CD8-positive, alpha-beta T cell (primary cell): ENCODE measurements at regions of chr17 and their contacts with region 1.

Region 1: DNA sequence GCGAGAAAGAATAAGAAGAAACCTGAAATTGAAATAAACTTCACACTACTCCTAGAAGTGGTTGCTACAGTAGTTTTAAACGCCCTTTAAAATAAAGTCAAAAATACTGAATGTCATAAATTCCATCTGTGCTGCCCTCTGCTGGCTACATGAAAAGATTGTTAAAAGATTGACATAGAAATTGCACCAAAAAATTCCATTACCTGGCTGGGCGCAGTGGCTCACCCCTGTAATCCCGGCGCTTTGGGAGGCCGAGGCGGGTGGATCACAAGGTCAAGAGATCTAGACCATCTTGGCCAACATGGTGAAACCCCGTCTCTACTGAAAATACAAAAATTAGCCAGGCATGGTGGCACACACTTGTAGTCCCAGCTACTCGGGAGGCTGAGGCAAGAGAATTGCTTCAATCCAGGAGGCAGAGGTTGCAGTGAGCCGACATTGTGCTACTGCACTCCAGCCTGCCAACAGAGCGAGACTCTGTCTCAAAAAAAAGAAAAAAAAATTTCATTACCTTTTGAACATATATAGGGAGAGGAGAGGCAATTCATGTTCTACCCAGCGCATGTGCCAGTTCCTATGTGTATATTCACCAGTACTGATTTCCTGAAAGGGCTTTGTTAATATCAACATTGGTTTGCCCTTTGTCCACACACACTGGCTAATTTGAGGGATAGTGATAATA is 36.5 kb downstream of the CYTH1 start:
- DNase-seq: peak in 6 of 9 experiments; percentile 40 to 80 (median 62)
- ATAC-seq: no peak
- H3K4me3 ChIP-seq: no peak overlapping the region
- H3K4me3 Mint-ChIP-seq: peak overlapping the region; percentile 63
- H3K27ac ChIP-seq: peak overlapping the region; percentile 2 to 84
- H3K27ac Mint-ChIP-seq: peak overlapping the region; percentile 91
- H3K4me1 ChIP-seq: peaks cover 95% of the 10 kb centered on the region
- H3K4me1 Mint-ChIP-seq: peaks cover 93% of the 10 kb centered on the region
- H3K27me3 ChIP-seq: no peaks in the 10 kb centered on the region
- H3K27me3 Mint-ChIP-seq: no peaks in the 10 kb centered on the region
- CTCF ChIP-seq: peak; percentile 87

Region 2: GRCh38 chr17:78708510-78708973 is 37.0 kb before region 1 on chr17:
- CTCF ChIA-PET with region 1: interaction called, 18 read pairs
- POLR2A ChIA-PET with region 1: interaction called, 13 read pairs
- intact Hi-C with region 1: loop called in 1 of 2 experiments (anchors 2 kb)
- DNase-seq: peak in 8 of 9 experiments; percentile 39 to 76 (median 60)
- ATAC-seq: peak; percentile 79
- H3K4me3 ChIP-seq: no peak overlapping the region
- H3K4me3 Mint-ChIP-seq: peak overlapping the region; percentile 33
- H3K27ac ChIP-seq: peak overlapping the region in 1 of 2 experiments; percentile 49
- H3K27ac Mint-ChIP-seq: peak overlapping the region; percentile 88
- H3K4me1 ChIP-seq: peaks cover 40% of the 10 kb centered on the region
- H3K4me1 Mint-ChIP-seq: peaks cover 55% of the 10 kb centered on the region
- H3K27me3 ChIP-seq: no peaks in the 10 kb centered on the region
- H3K27me3 Mint-ChIP-seq: no peaks in the 10 kb centered on the region
- CTCF ChIP-seq: peak; percentile 84

Region 3: GRCh38 chr17:78759203-78759968 is 13.8 kb after region 1 on chr17:
- CTCF ChIA-PET with region 1: interaction called, 9 read pairs
- POLR2A ChIA-PET with region 1: interaction called, 29 read pairs
- intact Hi-C with region 1: loop called in 1 of 2 experiments (anchors 1 kb)
- DNase-seq: peak; percentile 68 to 94 (median 87)
- ATAC-seq: peak; percentile 78
- H3K4me3 ChIP-seq: peak overlapping the region; percentile 19 to 21
- H3K4me3 Mint-ChIP-seq: peak overlapping the region; percentile 66
- H3K27ac ChIP-seq: peak overlapping the region; percentile 85 to 93
- H3K27ac Mint-ChIP-seq: peak overlapping the region; percentile 86
- H3K4me1 ChIP-seq: peaks cover 84% of the 10 kb centered on the region
- H3K4me1 Mint-ChIP-seq: peaks cover 77% of the 10 kb centered on the region
- H3K27me3 ChIP-seq: no peaks in the 10 kb centered on the region
- H3K27me3 Mint-ChIP-seq: no peaks in the 10 kb centered on the region
- CTCF ChIP-seq: no peak

Region 4: DNA sequence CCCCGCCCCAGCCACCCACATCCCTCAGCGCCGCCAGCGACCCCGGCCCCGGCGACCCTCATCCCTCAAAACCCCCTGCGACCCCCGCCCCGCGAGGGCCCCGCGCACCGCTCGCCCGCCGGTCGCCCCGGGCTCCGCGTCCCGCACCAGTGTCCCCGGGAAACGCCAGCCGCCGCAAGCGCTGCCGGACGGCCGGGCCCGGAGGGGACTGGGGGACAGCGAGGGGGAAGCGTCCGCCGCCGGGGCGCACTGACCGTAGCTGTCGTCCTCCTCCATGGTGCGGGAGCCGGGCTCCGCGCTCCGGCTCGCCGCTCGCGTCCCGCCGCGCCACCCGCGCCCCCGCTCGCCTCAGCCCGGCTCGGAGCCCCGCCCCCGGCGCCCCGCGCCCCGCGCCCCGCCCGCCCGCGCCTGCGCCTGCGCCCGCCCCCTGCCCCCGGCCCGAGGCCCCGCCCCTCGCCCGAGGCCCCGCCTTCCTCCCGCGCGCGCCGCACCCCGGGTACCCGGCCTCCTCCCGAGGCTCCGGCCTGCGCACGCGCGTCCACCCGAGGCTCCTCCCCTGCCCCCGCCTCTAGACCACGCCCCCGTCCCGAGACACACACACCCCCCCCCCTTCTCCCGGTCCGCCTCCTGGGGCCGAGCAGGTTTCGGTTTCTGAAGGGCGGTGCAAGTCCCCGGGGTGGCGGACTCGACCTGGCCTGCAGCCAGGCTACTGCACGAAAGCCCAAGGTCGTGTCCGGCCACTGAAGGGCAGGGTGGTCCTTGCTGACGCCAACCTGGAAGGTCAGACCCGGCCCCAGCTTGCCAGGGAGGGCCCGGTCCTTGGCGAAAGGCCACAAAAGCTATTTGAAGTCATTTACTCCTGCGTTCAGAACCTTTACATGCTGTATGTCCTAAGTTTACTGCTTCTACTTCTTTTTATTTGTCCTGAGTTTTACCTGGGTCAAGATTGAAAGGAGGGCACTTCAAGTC is 36.7 kb after region 1 on chr17 and contains the start of gene CYTH1:
- CTCF ChIA-PET with region 1: interaction called, 18 read pairs
- POLR2A ChIA-PET with region 1: interaction called, 21 read pairs
- intact Hi-C with region 1: loop called (anchors 1 kb)
- DNase-seq: peak; percentile 93 to 100 (median 98)
- ATAC-seq: peak; percentile 80
- H3K4me3 ChIP-seq: peak within 1 kb of the TSS; percentile 90 to 97
- H3K4me3 Mint-ChIP-seq: peak within 1 kb of the TSS; percentile 93
- H3K27ac ChIP-seq: peak within 1 kb of the TSS; percentile 86 to 93
- H3K27ac Mint-ChIP-seq: peak within 1 kb of the TSS; percentile 90
- H3K4me1 ChIP-seq: peaks cover 67% of the 10 kb centered on the region
- H3K4me1 Mint-ChIP-seq: peaks cover 55% of the 10 kb centered on the region
- H3K27me3 ChIP-seq: no peaks in the 10 kb centered on the region
- H3K27me3 Mint-ChIP-seq: no peaks in the 10 kb centered on the region
- CTCF ChIP-seq: no peak
- total RNA-seq, gene CYTH1: 475 to 490 TPM

Region 5: DNA sequence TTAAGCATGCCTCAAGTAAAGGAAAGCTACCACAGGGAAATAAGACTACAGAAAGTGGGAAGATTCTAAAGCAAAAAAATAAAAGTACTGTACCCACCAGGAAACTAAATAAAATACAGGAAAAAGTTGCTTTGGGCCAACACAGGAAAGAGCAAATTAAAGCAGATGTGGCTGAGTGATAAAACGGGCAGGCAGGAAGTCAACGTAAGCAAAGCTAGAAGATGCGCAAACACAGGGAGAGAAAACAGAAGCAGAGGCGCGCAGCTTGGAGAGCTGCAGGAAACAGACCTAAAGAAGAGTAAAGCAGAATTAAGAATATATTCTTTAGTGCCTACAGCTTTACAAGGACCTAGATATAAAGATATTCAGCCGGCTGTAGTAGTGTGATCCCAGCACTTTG is 73.4 kb after region 1 on chr17:
- CTCF ChIA-PET with region 1: interaction called, 3 read pairs
- POLR2A ChIA-PET with region 1: interaction called, 5 read pairs
- intact Hi-C with region 1: loop called in 1 of 2 experiments (anchors 5 kb)
- DNase-seq: peak; percentile 35 to 90 (median 64)
- ATAC-seq: peak; percentile 47
- H3K4me3 ChIP-seq: peak overlapping the region in 1 of 2 experiments; percentile 21
- H3K4me3 Mint-ChIP-seq: peak overlapping the region; percentile 58
- H3K27ac ChIP-seq: peak overlapping the region; percentile 61 to 78
- H3K27ac Mint-ChIP-seq: peak overlapping the region; percentile 90
- H3K4me1 ChIP-seq: peaks cover 43% of the 10 kb centered on the region
- H3K4me1 Mint-ChIP-seq: peaks cover 68% of the 10 kb centered on the region
- H3K27me3 ChIP-seq: no peaks in the 10 kb centered on the region
- H3K27me3 Mint-ChIP-seq: no peaks in the 10 kb centered on the region
- CTCF ChIP-seq: no peak